ENCODE measurements at regions of chr17 and their contacts with region 1.

Region 1: GRCh38 chr17:5191541-5192417 is at the start of gene ZNF594:
- DNase-seq: peak; percentile 94 to 98 (median 96)
- ATAC-seq: peak; percentile 99
- H3K4me3 ChIP-seq: peak within 1 kb of the TSS; percentile 97
- H3K4me3 Mint-ChIP-seq: peak within 1 kb of the TSS; percentile 95
- H3K27ac ChIP-seq: peak within 1 kb of the TSS; percentile 51 to 81
- H3K27ac Mint-ChIP-seq: peak within 1 kb of the TSS; percentile 88
- H3K4me1 ChIP-seq: peaks cover 23% of the 10 kb centered on the region
- H3K4me1 Mint-ChIP-seq: peaks cover 33% of the 10 kb centered on the region
- H3K27me3 ChIP-seq: no peaks in the 10 kb centered on the region
- H3K27me3 Mint-ChIP-seq: no peaks in the 10 kb centered on the region
- CTCF ChIP-seq: peak; percentile 80
- total RNA-seq, gene ZNF594: 2.2 to 3.1 TPM

Region 2: GRCh38 chr17:4986951-4987766 is 204.6 kb before region 1 on chr17 and contains the start of gene CAMTA2:
- CTCF ChIA-PET with region 1: no interaction called
- POLR2A ChIA-PET with region 1: no interaction called
- intact Hi-C with region 1: loop called in 1 of 2 experiments (anchors 10 kb)
- DNase-seq: peak; percentile 74 to 92 (median 86)
- ATAC-seq: peak; percentile 90
- H3K4me3 ChIP-seq: peak within 1 kb of the TSS; percentile 99
- H3K4me3 Mint-ChIP-seq: peak within 1 kb of the TSS; percentile 94
- H3K27ac ChIP-seq: peak within 1 kb of the TSS; percentile 90 to 92
- H3K27ac Mint-ChIP-seq: peak within 1 kb of the TSS; percentile 87
- H3K4me1 ChIP-seq: peaks cover 36% of the 10 kb centered on the region
- H3K4me1 Mint-ChIP-seq: peaks cover 40% of the 10 kb centered on the region
- H3K27me3 ChIP-seq: no peaks in the 10 kb centered on the region
- H3K27me3 Mint-ChIP-seq: no peaks in the 10 kb centered on the region
- CTCF ChIP-seq: peak; percentile 91
- total RNA-seq, gene CAMTA2: 41.6 to 51.3 TPM

Region 3: DNA sequence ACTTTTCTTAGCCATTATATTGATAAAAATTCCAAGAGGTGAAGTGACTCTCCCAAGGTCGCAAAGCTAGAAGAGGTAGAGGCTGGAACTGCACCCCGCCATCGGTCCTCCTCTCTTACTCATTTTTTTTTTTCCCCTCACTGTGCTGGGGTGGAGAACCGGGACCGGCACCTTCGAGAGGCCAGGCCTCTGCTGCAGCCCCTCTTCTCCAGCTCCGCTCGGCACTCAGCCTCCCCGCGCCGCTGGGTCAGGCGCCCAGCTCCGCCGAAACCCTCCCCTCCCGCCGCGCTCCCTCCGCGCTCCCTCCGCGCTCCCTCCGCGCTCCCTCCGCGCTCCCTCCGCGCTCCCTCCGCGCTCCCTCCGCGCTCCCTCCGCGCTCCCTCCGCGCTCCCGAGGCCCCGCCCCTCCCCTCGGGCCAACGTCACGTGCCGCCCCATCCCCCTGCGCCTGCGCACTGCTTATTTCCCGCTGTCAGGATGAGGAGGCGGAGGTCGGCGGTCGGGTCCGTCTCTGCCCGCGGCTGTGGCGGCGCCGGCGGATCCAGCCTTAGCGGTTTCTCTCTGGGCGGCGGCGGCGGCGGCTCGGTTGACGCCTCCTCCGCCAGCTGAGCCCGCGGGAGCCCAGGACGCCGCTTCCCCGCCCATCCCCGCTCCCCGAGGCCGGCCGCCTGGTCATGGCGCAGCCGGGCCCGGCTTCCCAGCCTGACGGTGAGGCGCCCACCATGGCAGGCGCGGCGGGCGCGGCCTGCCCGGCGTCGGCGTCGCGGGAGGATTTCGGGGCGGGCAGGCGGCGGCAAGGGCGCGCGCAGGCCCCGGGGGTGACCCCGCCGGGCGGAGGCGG is 90.3 kb after region 1 on chr17 and contains the start of gene RABEP1:
- CTCF ChIA-PET with region 1: interaction called, 3 read pairs
- POLR2A ChIA-PET with region 1: interaction called, 20 read pairs
- intact Hi-C with region 1: loop called in 1 of 2 experiments (anchors 5 kb)
- DNase-seq: peak; percentile 89 to 97 (median 94)
- ATAC-seq: peak; percentile 80
- H3K4me3 ChIP-seq: peak within 1 kb of the TSS; percentile 76
- H3K4me3 Mint-ChIP-seq: peak within 1 kb of the TSS; percentile 97
- H3K27ac ChIP-seq: peak within 1 kb of the TSS in 1 of 2 donors; percentile 64
- H3K27ac Mint-ChIP-seq: peak within 1 kb of the TSS; percentile 91
- H3K4me1 ChIP-seq: peaks cover 26% of the 10 kb centered on the region
- H3K4me1 Mint-ChIP-seq: peaks cover 40% of the 10 kb centered on the region
- H3K27me3 ChIP-seq: no peaks in the 10 kb centered on the region
- H3K27me3 Mint-ChIP-seq: no peaks in the 10 kb centered on the region
- CTCF ChIP-seq: peak; percentile 43
- total RNA-seq, gene RABEP1: 27.4 to 31.8 TPM

Region 4: DNA sequence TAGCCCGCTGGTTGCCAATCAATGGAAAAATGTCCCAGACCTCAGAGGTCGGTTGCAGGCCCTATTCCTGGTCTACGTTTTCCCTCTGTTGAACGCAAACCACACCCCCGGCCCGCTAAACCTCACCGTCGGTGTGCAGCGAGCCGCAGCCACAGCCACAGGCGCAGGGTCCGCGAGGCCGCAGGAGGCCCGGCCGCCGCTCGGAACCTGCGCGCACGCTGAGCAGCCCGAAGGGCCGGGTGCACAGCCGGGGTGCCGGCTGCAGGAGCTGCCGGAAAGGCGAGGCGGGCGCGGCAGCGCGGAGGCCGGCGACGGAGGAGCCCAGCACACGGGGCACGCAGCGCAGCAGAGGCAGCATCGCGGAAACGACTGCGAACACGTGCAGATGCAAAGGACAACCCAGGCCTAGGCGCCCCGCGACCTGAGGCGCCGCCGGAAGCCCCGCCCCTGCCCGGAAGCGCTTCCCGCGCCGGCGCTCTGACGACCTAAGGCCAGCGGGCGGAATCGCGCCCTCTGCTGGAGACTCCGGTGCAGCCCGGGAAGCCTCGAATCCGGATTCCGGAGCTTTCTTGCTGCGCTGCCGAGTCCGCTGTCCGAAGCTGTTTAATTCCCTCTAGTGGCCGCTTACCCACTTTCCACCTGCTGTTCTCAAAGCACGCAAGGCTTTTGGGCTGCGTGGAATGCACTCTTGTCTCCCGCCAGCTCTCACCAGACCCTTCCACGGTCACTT is 247.1 kb after region 1 on chr17 and contains the start of gene C1QBP:
- CTCF ChIA-PET with region 1: interaction called, 10 read pairs
- POLR2A ChIA-PET with region 1: interaction called, 6 read pairs
- intact Hi-C with region 1: no loop called
- DNase-seq: peak; percentile 85 to 97 (median 91)
- ATAC-seq: peak; percentile 93
- H3K4me3 ChIP-seq: peak within 1 kb of the TSS; percentile 70
- H3K4me3 Mint-ChIP-seq: peak within 1 kb of the TSS; percentile 89
- H3K27ac ChIP-seq: peak within 1 kb of the TSS; percentile 71 to 74
- H3K27ac Mint-ChIP-seq: peak within 1 kb of the TSS; percentile 86
- H3K4me1 ChIP-seq: peaks cover 33% of the 10 kb centered on the region
- H3K4me1 Mint-ChIP-seq: peaks cover 35% of the 10 kb centered on the region
- H3K27me3 ChIP-seq: no peaks in the 10 kb centered on the region
- H3K27me3 Mint-ChIP-seq: no peaks in the 10 kb centered on the region
- CTCF ChIP-seq: peak; percentile 96
- total RNA-seq, gene C1QBP: 59.9 to 62.9 TPM

Region 5: GRCh38 chr17:5486204-5487124 is 294.7 kb after region 1 on chr17 and contains the start of gene MIS12:
- CTCF ChIA-PET with region 1: no interaction called
- POLR2A ChIA-PET with region 1: no interaction called
- intact Hi-C with region 1: loop called in 1 of 2 experiments (anchors 5 kb)
- DNase-seq: peak; percentile 93 to 99 (median 96)
- ATAC-seq: peak; percentile 92
- H3K4me3 ChIP-seq: peak within 1 kb of the TSS; percentile 93
- H3K4me3 Mint-ChIP-seq: peak within 1 kb of the TSS; percentile 92
- H3K27ac ChIP-seq: peak within 1 kb of the TSS; percentile 86 to 100
- H3K27ac Mint-ChIP-seq: peak within 1 kb of the TSS; percentile 96
- H3K4me1 ChIP-seq: peaks cover 27% of the 10 kb centered on the region
- H3K4me1 Mint-ChIP-seq: peaks cover 61% of the 10 kb centered on the region
- H3K27me3 ChIP-seq: no peaks in the 10 kb centered on the region
- H3K27me3 Mint-ChIP-seq: no peaks in the 10 kb centered on the region
- CTCF ChIP-seq: no peak
- total RNA-seq, gene MIS12: 19.2 to 20.3 TPM